ENCODE measurements at regions of chr16 and their contacts with region 1.

Region 1: GRCh38 chr16:14219983-14220382 is 148.9 kb downstream of the MRTFB start:
- DNase-seq: peak; percentile 24
- ATAC-seq: peak; percentile 50
- H3K4me3 ChIP-seq: no peak overlapping the region
- H3K27ac ChIP-seq: no peak overlapping the region
- H3K4me1 ChIP-seq: peaks cover 8% of the 10 kb centered on the region
- H3K27me3 ChIP-seq: no peaks in the 10 kb centered on the region
- CTCF ChIP-seq: no peak
- EP300 ChIP-seq: no peak
- POLR2A ChIP-seq: no peak
- RAD21 ChIP-seq: no peak

Region 2: GRCh38 chr16:14151256-14152030 is 68.5 kb before region 1 on chr16:
- CTCF ChIA-PET with region 1: no interaction called
- POLR2A ChIA-PET with region 1: no interaction called
- in situ Hi-C with region 1: loop called (anchors 10 kb)
- intact Hi-C with region 1: no loop called
- DNase-seq: no peak
- ATAC-seq: no peak
- H3K4me3 ChIP-seq: no peak overlapping the region
- H3K27ac ChIP-seq: no peak overlapping the region
- H3K4me1 ChIP-seq: peaks cover 10% of the 10 kb centered on the region
- H3K27me3 ChIP-seq: no peaks in the 10 kb centered on the region
- CTCF ChIP-seq: no peak
- EP300 ChIP-seq: no peak
- POLR2A ChIP-seq: no peak
- RAD21 ChIP-seq: no peak

Region 3: GRCh38 chr16:14202697-14203096 is 17.3 kb before region 1 on chr16:
- CTCF ChIA-PET with region 1: no interaction called
- POLR2A ChIA-PET with region 1: no interaction called
- in situ Hi-C with region 1: no loop called
- intact Hi-C with region 1: no loop called
- DNase-seq: peak; percentile 54
- ATAC-seq: peak; percentile 82
- H3K4me3 ChIP-seq: no peak overlapping the region
- H3K27ac ChIP-seq: peak overlapping the region; percentile 0
- H3K4me1 ChIP-seq: peaks cover 19% of the 10 kb centered on the region
- H3K27me3 ChIP-seq: no peaks in the 10 kb centered on the region
- CTCF ChIP-seq: no peak
- EP300 ChIP-seq: no peak
- POLR2A ChIP-seq: no peak
- RAD21 ChIP-seq: no peak

Region 4: DNA sequence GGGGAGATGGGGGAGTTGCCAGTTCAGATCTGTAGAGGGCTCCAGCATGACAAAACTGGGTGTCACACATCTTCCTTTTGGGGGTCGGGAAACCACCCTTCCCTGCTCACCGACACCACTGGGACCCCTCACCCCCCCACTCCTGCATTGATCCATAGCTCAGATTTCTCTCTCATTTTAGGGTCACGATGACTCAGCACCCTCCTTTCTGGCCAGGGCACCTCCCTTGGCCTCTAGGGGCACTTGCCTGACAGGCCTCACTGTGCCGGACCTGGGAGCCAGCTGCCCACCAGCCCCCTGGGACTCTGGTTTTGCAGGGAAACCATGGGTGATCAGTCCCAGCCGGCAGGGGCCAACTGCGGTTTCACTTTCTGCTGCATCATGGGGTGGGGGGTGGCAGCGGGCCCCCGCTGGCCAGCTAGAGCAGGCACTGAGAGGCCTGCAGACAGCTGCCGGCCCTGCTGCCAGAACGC is 90.6 kb after region 1 on chr16:
- CTCF ChIA-PET with region 1: no interaction called
- POLR2A ChIA-PET with region 1: no interaction called
- in situ Hi-C with region 1: no loop called
- intact Hi-C with region 1: no loop called
- DNase-seq: peak; percentile 51
- ATAC-seq: peak; percentile 75
- H3K4me3 ChIP-seq: no peak overlapping the region; a peak in 1 of 6 replicates
- H3K27ac ChIP-seq: peak overlapping the region; percentile 54
- H3K4me1 ChIP-seq: peaks cover 69% of the 10 kb centered on the region
- H3K27me3 ChIP-seq: no peaks in the 10 kb centered on the region
- CTCF ChIP-seq: peak; percentile 48
- EP300 ChIP-seq: no peak; a peak in 1 of 4 replicates
- POLR2A ChIP-seq: no peak
- RAD21 ChIP-seq: peak; percentile 75

Measured in HepG2 (cell line).